ENCODE measurements at regions of chr5 and their contacts with region 1.

Region 1: DNA sequence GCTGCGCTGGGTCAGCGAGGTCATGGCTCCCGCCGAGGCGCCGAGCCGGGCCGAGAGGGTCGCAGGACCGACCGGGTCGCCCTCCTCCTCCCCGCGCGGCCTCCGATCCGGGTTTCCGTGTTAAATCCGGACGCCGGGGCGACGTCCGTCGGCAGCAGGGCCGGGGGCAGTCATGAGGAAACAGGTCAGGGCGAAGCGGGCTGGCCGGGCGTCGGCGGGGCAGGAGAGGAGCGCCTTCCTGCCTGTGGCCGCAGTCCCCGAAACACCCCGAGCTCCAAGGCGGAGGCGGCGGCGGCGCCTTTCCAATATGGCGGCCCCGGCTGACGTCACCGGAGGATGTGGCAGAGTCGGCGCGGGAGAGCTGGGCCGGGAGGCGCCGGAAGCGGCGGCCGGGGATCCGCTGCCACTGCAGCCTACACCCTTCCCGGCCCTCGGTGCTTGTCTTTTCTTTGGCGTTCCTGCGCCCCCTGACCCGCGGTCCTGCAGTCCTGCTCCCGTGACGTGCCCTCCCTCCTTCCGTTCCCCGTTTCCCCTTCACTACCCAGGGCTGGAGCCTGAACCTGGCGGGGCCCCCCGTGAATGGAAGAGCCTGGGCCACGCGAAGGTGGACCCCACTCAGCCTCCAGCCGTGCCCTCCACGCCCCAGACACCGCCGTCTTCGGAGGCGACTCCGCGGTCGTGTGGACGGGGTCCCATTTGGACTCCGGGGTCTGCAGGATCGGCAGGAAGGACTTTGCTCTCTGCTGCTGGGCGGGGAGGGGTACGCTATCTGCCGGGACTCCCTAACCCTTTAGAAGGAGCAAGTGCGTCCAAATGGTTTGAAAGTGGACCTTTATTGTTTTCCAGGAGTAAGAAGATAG is at the start of gene GOLPH3:
- DNase-seq: peak; percentile 98
- H3K4me3 Mint-ChIP-seq: peak within 1 kb of the TSS; percentile 95
- H3K27ac Mint-ChIP-seq: peak within 1 kb of the TSS; percentile 98
- H3K4me1 Mint-ChIP-seq: peaks cover 32% of the 10 kb centered on the region
- H3K27me3 Mint-ChIP-seq: no peaks in the 10 kb centered on the region
- total RNA-seq, gene GOLPH3: 85.4 and 92.7 TPM in 2 replicates

Region 2: GRCh38 chr5:31531888-31532710 is 642.1 kb before region 1 on chr5 and contains the starts of genes C5orf22 and DROSHA:
- intact Hi-C with region 1: loop called (anchors 1 kb)
- DNase-seq: peak; percentile 98
- H3K4me3 Mint-ChIP-seq: peak within 1 kb of the TSS; percentile 91
- H3K27ac Mint-ChIP-seq: peak within 1 kb of the TSS; percentile 96
- H3K4me1 Mint-ChIP-seq: peaks cover 27% of the 10 kb centered on the region
- H3K27me3 Mint-ChIP-seq: no peaks in the 10 kb centered on the region
- total RNA-seq, gene C5orf22: 34.2 and 37.7 TPM in 2 replicates
- total RNA-seq, gene DROSHA: 86.5 and 88.7 TPM in 2 replicates

Region 3: GRCh38 chr5:32076699-32077695 is 97.2 kb before region 1 on chr5:
- intact Hi-C with region 1: no loop called
- DNase-seq: peak; percentile 81
- H3K4me3 Mint-ChIP-seq: no peak overlapping the region
- H3K27ac Mint-ChIP-seq: no peak overlapping the region
- H3K4me1 Mint-ChIP-seq: no peaks in the 10 kb centered on the region
- H3K27me3 Mint-ChIP-seq: no peaks in the 10 kb centered on the region

Region 4: DNA sequence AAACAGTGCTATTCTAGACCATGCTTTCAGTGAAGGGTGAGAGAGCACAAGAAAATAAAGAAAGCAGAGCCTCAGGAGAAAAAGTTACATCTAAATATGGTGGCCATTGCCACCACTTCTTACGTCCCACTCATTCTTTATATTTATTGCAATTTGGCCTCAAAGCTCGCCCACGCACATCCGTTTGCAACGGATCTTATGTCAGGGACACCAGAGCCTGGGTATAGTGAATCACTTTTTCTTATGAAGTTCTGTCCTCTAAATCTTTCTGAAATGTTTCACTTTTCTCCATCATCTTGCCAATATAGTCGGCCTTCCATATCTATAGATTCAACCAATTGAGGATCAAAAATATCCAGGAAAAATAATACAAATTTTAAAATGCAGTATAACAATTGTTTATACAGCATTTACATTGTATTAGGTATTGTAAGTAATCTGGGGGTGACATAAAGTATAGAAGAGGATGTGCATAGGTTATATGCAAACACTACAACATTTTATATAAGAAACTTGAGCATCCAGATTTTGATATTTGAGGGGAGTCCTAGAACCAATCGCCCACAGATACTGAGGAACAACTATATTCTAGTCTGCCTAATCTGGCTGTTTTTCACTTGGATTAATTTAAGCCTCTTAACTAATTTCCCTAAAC is 35.3 kb before region 1 on chr5:
- intact Hi-C with region 1: loop called (anchors 2 kb)
- DNase-seq: peak; percentile 71
- H3K4me3 Mint-ChIP-seq: peak overlapping the region; percentile 71
- H3K27ac Mint-ChIP-seq: peak overlapping the region; percentile 88
- H3K4me1 Mint-ChIP-seq: peaks cover 18% of the 10 kb centered on the region
- H3K27me3 Mint-ChIP-seq: no peaks in the 10 kb centered on the region

Region 5: DNA sequence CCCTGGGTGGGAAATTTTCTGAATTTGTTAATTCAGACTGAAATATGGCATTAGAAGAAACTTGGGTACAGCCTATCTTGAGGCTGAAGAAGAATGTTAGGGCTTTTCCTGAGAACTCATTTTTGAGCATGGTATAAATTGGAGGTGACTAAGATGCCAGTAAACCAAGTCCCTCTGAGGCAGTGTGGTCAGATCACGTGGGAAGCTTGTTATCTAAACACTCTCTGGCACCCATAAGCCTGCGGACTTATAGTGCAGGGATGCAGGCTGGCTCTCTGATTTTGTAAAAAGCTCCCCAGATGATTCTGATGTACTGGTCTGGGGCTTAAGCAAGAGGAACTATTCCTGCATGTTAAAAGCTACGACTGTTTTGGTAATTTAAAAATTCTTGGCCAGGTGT is 104.2 kb after region 1 on chr5:
- intact Hi-C with region 1: loop called (anchors 2 kb)
- DNase-seq: peak; percentile 69
- H3K4me3 Mint-ChIP-seq: no peak overlapping the region
- H3K27ac Mint-ChIP-seq: no peak overlapping the region
- H3K4me1 Mint-ChIP-seq: peaks cover 51% of the 10 kb centered on the region
- H3K27me3 Mint-ChIP-seq: no peaks in the 10 kb centered on the region

Region 6: GRCh38 chr5:32329308-32329834 is 155.1 kb after region 1 on chr5:
- intact Hi-C with region 1: loop called (anchors 5 kb)
- DNase-seq: peak; percentile 87
- H3K4me3 Mint-ChIP-seq: no peak overlapping the region
- H3K27ac Mint-ChIP-seq: no peak overlapping the region
- H3K4me1 Mint-ChIP-seq: peaks cover 4% of the 10 kb centered on the region
- H3K27me3 Mint-ChIP-seq: peaks cover 2% of the 10 kb centered on the region